PC-9 (cell line): ENCODE measurements at regions of chr7 and their contacts with region 1.

Region 1: DNA sequence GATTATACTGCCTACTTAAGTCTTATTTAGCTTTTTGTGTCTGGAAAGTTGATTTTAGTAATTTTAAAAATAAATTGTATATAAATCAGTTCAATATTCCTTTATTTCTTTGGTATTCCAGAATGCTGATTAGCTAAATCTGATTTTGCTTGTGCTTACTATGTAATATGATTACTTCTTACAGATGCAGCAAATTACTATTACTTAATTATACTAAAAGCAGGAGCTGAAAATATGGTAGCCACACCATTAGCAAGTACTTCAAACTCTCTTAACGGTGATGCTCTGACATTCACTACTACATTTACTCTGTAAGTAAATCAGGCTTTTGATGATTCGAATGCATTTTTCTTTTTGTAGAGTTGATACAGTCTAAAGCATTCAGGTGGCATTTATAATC is 34.0 kb downstream of the ANLN start:
- DNase-seq: no peak
- H3K4me3 ChIP-seq: no peak overlapping the region
- H3K27ac ChIP-seq: no peak overlapping the region
- H3K4me1 ChIP-seq: no peaks in the 10 kb centered on the region
- H3K27me3 ChIP-seq: no peaks in the 10 kb centered on the region
- CTCF ChIP-seq: no peak

Region 2: GRCh38 chr7:36408589-36408988 is 15.0 kb before region 1 on chr7:
- CTCF ChIA-PET with region 1: no interaction called
- POLR2A ChIA-PET with region 1: no interaction called
- intact Hi-C with region 1: loop called (anchors 2 kb)
- DNase-seq: no peak
- H3K4me3 ChIP-seq: no peak overlapping the region
- H3K27ac ChIP-seq: no peak overlapping the region
- H3K4me1 ChIP-seq: no peaks in the 10 kb centered on the region
- H3K27me3 ChIP-seq: no peaks in the 10 kb centered on the region
- CTCF ChIP-seq: no peak